ENCODE measurements at regions of chr3 and their contacts with region 1.

Region 1: DNA sequence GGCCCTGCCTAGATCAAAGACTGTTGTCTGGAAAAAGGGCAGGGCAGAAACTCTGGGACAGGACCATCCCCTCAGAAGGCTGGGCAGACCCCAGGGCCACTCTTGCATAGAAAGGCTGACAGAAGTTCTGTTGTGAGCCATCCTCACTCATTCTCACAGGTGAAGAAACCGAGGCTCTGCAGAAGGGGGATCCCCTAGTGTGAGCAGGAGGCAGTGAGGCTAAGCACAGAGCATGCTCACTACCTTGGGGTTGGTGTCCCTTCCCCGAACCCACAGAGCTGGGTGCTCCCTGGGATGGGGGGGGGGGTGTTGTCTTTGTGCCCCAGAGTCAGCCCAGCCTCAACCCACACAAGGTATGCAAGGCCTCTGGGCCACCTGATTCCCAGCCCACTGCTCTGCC is 50.9 kb upstream of the TMEM115 start:
- DNase-seq: no peak
- ATAC-seq: no peak
- H3K4me3 ChIP-seq: no peak overlapping the region
- H3K27ac ChIP-seq: no peak overlapping the region
- H3K4me1 ChIP-seq: no peaks in the 10 kb centered on the region
- H3K27me3 ChIP-seq: peaks cover 32% of the 10 kb centered on the region
- CTCF ChIP-seq: no peak
- POLR2A ChIP-seq: no peak
- RAD21 ChIP-seq: no peak

Region 2: DNA sequence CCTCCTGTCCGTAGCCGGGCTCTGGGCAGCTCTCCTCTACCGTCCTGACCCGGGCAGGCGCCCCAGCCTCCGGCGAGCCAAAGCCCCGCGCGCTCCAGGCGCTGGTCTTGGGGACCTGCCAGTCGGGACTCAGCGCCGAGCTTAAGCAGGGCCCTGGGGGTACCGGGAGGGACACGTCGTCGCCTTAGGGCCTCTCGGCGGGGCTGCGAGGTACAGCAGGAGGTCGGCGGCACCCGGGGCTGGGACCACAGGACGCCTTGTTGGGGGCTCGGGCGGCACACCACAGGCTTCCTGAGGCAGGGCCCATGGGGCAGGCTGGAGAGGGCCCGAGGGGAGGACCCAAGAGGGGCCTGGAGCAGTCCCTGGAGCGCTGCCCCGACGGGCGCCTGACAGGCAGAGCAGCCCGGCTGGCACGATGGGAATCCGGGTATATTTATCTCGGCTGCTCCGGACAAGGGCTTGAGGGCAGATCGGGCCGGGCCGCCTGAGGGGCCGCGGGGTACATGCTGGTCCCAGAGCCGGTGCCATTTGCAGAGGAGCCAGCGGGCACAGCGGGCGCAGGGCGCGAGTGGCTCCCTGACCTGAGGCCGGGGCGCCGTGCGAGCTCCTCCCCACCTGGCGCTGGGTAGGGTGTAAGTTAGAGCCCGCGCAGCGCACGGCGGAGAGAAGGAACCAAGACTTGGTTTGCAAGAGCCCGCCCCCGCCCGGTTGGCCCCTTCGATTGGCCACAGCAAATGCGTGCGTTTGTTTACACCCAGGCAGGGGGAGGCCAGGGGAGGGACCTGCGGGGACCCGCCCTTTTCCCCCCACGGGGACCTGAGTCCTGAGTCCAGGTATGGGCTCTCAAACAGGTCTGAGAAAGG is 204.5 kb before region 1 on chr3:
- CTCF ChIA-PET with region 1: no interaction called
- POLR2A ChIA-PET with region 1: no interaction called
- dilution Hi-C with region 1: no loop called
- in situ Hi-C with region 1: no loop called
- intact Hi-C with region 1: no loop called
- DNase-seq: no peak
- ATAC-seq: peak; percentile 67
- H3K4me3 ChIP-seq: peak overlapping the region; percentile 43
- H3K27ac ChIP-seq: no peak overlapping the region
- H3K4me1 ChIP-seq: peaks cover 2% of the 10 kb centered on the region; the same call in 1 of the 2 replicates
- H3K27me3 ChIP-seq: peaks cover 70% of the 10 kb centered on the region
- CTCF ChIP-seq: no peak
- POLR2A ChIP-seq: no peak
- RAD21 ChIP-seq: no peak

Region 3: DNA sequence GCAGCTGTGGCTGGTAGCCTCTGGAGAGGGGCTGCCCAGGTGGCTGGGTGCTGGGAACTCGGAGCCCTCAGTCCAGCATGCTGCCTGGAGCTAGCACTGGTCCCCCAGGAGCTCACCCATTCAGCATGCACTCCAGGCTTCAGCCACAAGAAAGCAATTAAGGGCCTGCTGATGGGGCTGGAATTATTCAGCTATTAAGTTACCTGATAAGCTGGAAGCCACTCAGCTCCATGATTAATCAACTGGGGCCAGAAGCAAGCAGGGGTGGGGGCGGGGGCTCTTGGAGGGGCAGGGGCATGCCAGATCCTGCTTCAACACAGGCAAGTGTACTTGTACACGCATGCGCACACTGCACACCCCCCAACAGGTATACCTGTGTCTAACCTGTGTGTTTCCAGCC is 28.8 kb before region 1 on chr3:
- CTCF ChIA-PET with region 1: no interaction called
- POLR2A ChIA-PET with region 1: interaction called, 14 read pairs
- dilution Hi-C with region 1: no loop called
- in situ Hi-C with region 1: no loop called
- intact Hi-C with region 1: no loop called
- DNase-seq: no peak
- ATAC-seq: no peak
- H3K4me3 ChIP-seq: no peak overlapping the region
- H3K27ac ChIP-seq: no peak overlapping the region
- H3K4me1 ChIP-seq: no peaks in the 10 kb centered on the region
- H3K27me3 ChIP-seq: peaks cover 34% of the 10 kb centered on the region
- CTCF ChIP-seq: no peak
- POLR2A ChIP-seq: no peak
- RAD21 ChIP-seq: no peak

Measured in IMR-90 (cell line).